ENCODE measurements at regions of chr11 and their contacts with region 1.

Region 1: DNA sequence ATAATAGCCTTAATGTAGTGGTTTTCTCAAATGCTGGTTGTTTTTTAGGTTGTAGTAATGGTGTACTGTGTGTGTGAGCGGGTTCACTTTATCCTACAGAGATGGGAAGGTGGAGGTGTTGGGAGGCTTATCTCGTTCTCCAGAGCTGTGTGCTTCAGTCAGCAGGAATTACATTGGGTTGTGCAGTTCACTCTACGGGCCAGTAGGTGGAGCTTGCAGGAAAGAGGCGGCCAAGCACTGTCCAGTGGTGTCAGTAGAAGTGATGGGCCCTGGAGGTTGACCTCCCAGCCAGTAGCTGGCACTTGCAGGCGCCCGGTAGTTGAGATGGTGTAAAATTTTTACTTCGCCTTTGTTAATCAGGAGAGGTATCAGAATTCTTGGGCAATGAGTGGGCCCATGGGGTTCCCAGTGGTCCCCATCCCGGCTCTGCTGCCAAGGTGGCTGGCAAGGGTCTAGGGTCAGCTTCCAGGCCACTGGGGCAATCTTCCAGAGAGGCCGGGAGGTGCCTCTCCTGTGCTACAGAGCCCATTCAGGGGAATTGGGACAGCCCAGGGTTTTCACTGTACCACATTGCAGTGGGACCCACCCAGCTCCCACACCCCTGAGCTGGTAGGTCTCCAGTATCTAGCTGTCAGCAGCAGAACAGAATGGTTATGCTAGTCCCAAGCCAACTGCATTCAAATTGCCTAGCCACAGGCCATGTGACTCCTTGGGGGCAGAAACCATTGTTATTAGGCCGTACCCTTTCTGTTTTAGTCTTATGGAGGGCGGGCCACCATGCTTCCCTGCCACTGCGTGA is 43.9 kb downstream of the BIRC2 start:
- DNase-seq: peak; percentile 57 to 77 (median 69)
- ATAC-seq: peak; percentile 88 to 98 (median 94)
- H3K4me3 ChIP-seq: no peak overlapping the region
- H3K27ac ChIP-seq: peak overlapping the region in 1 of 4 donors; percentile 5
- H3K4me1 ChIP-seq: no peaks in the 10 kb centered on the region
- H3K27me3 ChIP-seq: no peaks in the 10 kb centered on the region
- CTCF ChIP-seq: peak; percentile 68 to 82 (median 78)

Region 2: DNA sequence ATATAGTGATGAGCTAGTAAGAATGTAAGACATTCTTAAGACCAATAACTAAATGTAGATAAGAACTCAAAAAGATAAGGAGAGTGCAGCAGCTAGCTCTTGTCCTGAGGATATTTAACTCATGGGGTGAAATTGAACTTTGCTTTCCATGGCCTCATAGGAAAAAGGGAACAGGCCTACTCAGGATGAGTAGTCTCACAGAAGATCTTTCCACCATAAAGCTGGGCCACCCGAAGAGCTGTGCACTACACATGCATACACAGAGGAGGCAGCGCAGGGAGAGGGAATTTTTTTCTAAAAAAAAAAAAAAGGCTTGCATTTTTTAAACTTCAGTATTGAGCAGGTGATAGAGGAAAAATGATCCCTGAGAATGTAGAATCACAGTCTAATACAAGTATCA is 403.5 kb before region 1 on chr11:
- intact Hi-C with region 1: no loop called
- DNase-seq: no peak
- ATAC-seq: no peak
- H3K4me3 ChIP-seq: no peak overlapping the region
- H3K27ac ChIP-seq: no peak overlapping the region
- H3K4me1 ChIP-seq: no peaks in the 10 kb centered on the region
- H3K27me3 ChIP-seq: no peaks in the 10 kb centered on the region
- CTCF ChIP-seq: no peak

Region 3: DNA sequence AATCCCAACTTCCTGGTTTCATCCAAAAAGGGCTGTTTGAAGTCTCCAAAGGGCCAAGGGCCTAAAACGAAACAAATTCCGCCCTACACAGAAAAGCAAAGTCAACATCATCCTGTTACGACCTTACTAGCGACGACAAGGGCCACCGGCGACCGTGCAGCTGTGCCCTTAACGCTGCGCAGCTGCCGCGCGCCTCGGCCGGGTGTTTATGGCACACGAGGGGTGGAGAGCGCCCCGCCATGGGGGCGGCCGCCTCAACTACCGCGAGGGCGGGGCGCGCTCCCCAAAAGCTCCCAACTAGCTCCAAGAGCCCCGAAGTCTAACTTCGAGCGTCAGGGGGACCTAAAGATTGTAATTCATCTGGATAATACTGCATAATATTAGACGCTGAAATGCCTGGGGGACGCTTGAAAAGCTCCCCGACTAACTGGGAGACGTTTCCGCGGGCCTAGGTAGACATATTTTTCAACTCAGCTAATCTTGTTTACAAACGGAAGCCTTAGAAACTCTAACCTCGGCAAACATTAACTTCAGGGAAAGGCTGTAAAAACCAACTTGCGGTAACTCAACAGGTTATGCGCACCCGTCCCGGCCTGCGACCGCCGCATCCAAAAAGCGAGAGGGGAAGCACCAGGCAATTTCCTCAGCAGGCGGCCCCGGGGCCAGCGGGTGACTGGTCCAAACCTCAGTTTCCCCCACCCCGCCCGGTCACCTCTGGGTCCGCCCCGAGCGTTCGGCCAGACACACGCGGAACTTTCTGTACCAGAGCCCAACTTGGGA is 61.0 kb after region 1 on chr11:
- intact Hi-C with region 1: no loop called
- DNase-seq: peak; percentile 50 to 82 (median 69)
- ATAC-seq: peak; percentile 60 to 81 (median 74)
- H3K4me3 ChIP-seq: peak overlapping the region; percentile 64 to 86 (median 80)
- H3K27ac ChIP-seq: peak overlapping the region; percentile 83 to 97 (median 94)
- H3K4me1 ChIP-seq: peaks cover 3 to 28% (median 27%) of the 10 kb centered on the region in 3 donors
- H3K27me3 ChIP-seq: no peaks in the 10 kb centered on the region
- CTCF ChIP-seq: no peak

Region 4: DNA sequence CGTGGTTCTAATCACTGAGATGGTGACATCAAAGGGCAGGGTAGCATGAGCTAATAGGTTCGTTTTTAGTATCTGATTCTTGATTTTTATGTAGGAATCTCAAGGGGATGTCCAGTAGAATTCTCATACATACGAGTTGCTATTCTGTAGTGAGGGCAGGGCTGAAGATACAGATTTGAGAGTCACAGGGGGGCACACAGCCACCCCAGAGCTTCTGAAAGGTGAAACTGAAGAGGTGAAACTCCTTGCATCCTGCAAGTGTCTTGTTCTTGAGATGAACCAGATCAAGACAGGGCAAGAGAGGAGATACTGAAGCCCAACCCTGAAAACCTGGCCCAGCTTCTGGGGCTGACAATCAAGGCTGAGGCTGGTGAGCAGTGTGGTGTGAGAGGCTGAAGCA is 97.3 kb after region 1 on chr11:
- intact Hi-C with region 1: loop called in 1 of 3 experiments (anchors 10 kb)
- DNase-seq: no peak
- ATAC-seq: no peak
- H3K4me3 ChIP-seq: no peak overlapping the region
- H3K27ac ChIP-seq: no peak overlapping the region
- H3K4me1 ChIP-seq: peaks cover 0 to 6% (median 6%) of the 10 kb centered on the region in 3 donors
- H3K27me3 ChIP-seq: no peaks in the 10 kb centered on the region
- CTCF ChIP-seq: no peak

Region 5: GRCh38 chr11:102592634-102593581 is 202.0 kb after region 1 on chr11:
- intact Hi-C with region 1: no loop called
- DNase-seq: no peak
- ATAC-seq: no peak
- H3K4me3 ChIP-seq: no peak overlapping the region
- H3K27ac ChIP-seq: no peak overlapping the region
- H3K4me1 ChIP-seq: no peaks in the 10 kb centered on the region
- H3K27me3 ChIP-seq: no peaks in the 10 kb centered on the region
- CTCF ChIP-seq: peak in 1 of 4 donors; percentile 14